ENCODE measurements at regions of chr6 and their contacts with region 1.

Region 1: DNA sequence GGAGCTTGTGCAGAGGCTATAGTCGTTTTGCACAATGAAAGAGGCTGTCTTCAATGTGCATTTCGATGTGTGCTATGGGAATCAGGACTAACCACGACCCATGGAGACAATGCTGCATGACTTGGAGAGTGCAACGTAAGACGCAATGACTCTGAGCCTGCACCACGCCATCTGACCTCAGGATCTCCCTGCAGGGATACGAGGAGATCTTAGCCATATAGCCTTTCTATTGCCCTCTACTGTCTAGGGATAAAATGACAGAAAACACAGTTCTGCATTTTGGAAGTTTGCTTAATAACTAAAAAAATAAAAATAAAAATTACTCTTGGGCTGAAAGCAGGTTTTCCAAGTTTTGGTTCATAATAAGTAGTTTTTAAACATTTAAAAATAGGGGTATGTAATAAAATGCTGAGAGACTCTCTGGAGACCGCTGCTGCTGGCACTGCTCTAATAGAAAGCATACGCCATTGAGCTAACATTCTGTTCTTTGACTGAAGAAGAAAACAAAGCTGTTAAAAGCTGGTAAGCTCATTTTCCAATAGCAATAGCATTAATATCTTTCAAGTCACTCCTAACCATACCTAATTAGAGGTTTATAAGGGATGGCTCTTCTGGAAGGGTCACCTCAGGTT is 87.2 kb downstream of the PDE7B start:
- DNase-seq: no peak
- CTCF ChIP-seq: peak; percentile 29

Region 2: GRCh38 chr6:135955099-135955498 is 16.4 kb after region 1 on chr6:
- CTCF ChIA-PET with region 1: interaction called, 20 read pairs
- POLR2A ChIA-PET with region 1: no interaction called
- DNase-seq: no peak
- CTCF ChIP-seq: no peak

Region 3: GRCh38 chr6:136014454-136015421 is 76.0 kb after region 1 on chr6:
- CTCF ChIA-PET with region 1: no interaction called
- POLR2A ChIA-PET with region 1: no interaction called
- DNase-seq: no peak
- CTCF ChIP-seq: no peak